ENCODE measurements at regions of chr12 and their contacts with region 1.

Region 1: GRCh38 chr12:116737774-116738700 is at the starts of genes RNFT2 and SPRING1:
- DNase-seq: peak; percentile 97 to 98 (median 98)
- H3K4me3 ChIP-seq: peak within 1 kb of the TSS; percentile 57 to 84 (median 68)
- H3K4me3 Mint-ChIP-seq: peak within 1 kb of the TSS; percentile 83 to 98
- H3K27ac ChIP-seq: peak within 1 kb of the TSS in 1 of 2 donors; percentile 71
- H3K27ac Mint-ChIP-seq: peak within 1 kb of the TSS; percentile 46 to 91 (median 83)
- H3K4me1 ChIP-seq: peaks cover 15 to 26% of the 10 kb centered on the region in 2 donors
- H3K4me1 Mint-ChIP-seq: peaks cover 22% of the 10 kb centered on the region
- H3K27me3 ChIP-seq: peaks cover 3% of the 10 kb centered on the region in 2 donors
- H3K27me3 Mint-ChIP-seq: peaks cover 2 to 13% (median 10%) of the 10 kb centered on the region in 3 donors
- CTCF ChIP-seq: no peak
- polyA plus RNA-seq, gene RNFT2: 0.05 TPM in 1 of 3 donors, not detected in the others
- polyA plus RNA-seq, gene SPRING1: 6.3 to 19.3 (median 15.6) TPM

Region 2: GRCh38 chr12:116818948-116819832 is 81.2 kb after region 1 on chr12:
- intact Hi-C with region 1: loop called (anchors 2 to 5 kb)
- DNase-seq: peak; percentile 74 to 91 (median 80)
- H3K4me3 ChIP-seq: peak overlapping the region; percentile 77 to 89 (median 89)
- H3K4me3 Mint-ChIP-seq: peak overlapping the region; percentile 96 to 99
- H3K27ac ChIP-seq: peak overlapping the region; percentile 54 to 77
- H3K27ac Mint-ChIP-seq: peak overlapping the region; percentile 90 to 96 (median 93)
- H3K4me1 ChIP-seq: peaks cover 10 to 12% of the 10 kb centered on the region in 2 donors
- H3K4me1 Mint-ChIP-seq: peaks cover 15% of the 10 kb centered on the region
- H3K27me3 ChIP-seq: no peaks in the 10 kb centered on the region
- H3K27me3 Mint-ChIP-seq: peaks cover 1 to 13% (median 5%) of the 10 kb centered on the region in 3 donors
- CTCF ChIP-seq: no peak

Region 3: DNA sequence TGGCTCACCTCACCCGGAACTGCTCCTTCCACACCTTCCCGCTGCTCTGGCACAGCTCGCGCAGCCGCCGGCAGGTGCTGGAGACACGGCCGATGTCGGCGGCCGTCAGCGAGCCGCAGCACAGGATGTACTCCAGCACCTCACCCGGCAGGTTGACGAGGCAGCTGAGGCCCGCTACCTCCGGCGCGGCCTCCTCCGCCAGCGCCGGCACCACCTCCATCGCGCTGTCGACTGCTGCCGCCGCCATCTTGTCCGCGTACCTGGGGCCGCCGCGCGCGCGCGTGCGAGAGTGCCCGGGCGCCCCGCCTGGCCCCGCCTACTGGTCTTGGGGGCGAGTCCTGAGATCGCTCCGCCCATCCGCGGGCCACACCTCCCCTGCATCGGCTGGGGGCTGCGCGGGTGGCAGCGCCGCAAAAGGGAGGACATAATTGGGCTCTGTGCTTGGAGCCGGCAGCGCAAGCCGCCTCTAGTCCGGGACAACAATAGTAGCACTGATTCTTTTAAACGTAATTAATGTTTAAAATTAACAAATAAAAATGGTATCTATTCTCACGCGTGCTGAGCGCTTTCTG is 452.3 kb after region 1 on chr12 and contains the start of gene FBXO21:
- intact Hi-C with region 1: no loop called
- DNase-seq: peak; percentile 60 to 74 (median 69)
- H3K4me3 ChIP-seq: peak within 1 kb of the TSS; percentile 66 to 97 (median 81)
- H3K4me3 Mint-ChIP-seq: peak within 1 kb of the TSS; percentile 95 to 98
- H3K27ac ChIP-seq: peak within 1 kb of the TSS in 1 of 2 donors; percentile 66
- H3K27ac Mint-ChIP-seq: peak within 1 kb of the TSS in 6 of 7 donors; percentile 23 to 81 (median 44)
- H3K4me1 ChIP-seq: peaks cover 12 to 17% of the 10 kb centered on the region in 2 donors
- H3K4me1 Mint-ChIP-seq: peaks cover 14% of the 10 kb centered on the region
- H3K27me3 ChIP-seq: peaks cover 8 to 16% of the 10 kb centered on the region in 2 donors
- H3K27me3 Mint-ChIP-seq: peaks cover 24 to 42% (median 27%) of the 10 kb centered on the region in 3 donors
- CTCF ChIP-seq: no peak
- polyA plus RNA-seq, gene FBXO21: 7.7 to 19.1 (median 17.2) TPM

Measured in CD14-positive monocyte (primary cell).